Natural killer cell (primary cell): ENCODE measurements at regions of chr7 and their contacts with region 1.

Region 1: GRCh38 chr7:7848246-7848645 is 120.3 kb upstream of the GLCCI1 start:
- DNase-seq: peak in 1 of 2 donors; percentile 24
- ATAC-seq: peak; percentile 72 to 93 (median 79)
- H3K4me3 ChIP-seq: no peak overlapping the region
- H3K4me3 Mint-ChIP-seq: peak overlapping the region; percentile 82
- H3K27ac ChIP-seq: peak overlapping the region; percentile 44
- H3K27ac Mint-ChIP-seq: peak overlapping the region; percentile 83
- H3K4me1 ChIP-seq: peaks cover 12% of the 10 kb centered on the region
- H3K4me1 Mint-ChIP-seq: peaks cover 46 to 48% of the 10 kb centered on the region in 2 donors
- H3K27me3 ChIP-seq: no peaks in the 10 kb centered on the region
- H3K27me3 Mint-ChIP-seq: no peaks in the 10 kb centered on the region
- CTCF ChIP-seq: no peak

Region 2: DNA sequence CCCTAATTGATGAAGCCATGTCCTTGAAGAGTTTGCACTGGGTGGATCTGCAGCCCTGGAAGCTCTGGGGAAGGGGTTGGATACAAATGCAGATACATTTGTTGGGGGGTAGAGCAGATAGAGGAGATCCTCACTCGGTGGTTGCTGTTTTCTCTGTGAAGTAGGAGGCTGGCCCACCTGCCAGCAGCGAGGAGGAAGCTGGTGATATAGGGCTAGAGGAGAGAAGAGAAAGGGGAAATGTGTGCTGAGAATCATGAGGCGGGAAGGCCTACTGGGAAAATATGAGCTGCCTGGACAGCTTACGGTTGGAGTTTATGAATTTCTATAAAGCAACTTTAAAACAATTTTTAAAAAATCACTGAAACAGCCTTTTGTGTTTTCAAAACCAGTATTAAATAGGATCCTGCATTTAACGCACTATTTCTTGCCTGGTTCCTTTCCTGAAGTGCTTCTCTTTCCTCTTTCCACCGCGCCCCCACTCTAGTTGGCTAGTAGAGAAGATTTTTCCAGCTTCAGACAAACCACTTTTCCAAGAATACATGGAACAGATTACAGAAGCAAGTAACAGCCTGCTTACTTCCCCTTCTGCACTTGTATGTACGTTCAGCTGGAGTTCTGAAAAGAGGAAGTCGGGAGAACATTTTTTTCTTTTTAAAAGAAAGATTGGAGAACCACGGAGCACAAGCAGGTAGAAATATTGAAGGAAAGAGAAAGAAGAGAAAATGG is 19.8 kb after region 1 on chr7:
- intact Hi-C with region 1: loop called (anchors 2 kb)
- DNase-seq: no peak
- ATAC-seq: peak in 2 of 3 donors; percentile 5 to 33
- H3K4me3 ChIP-seq: no peak overlapping the region
- H3K4me3 Mint-ChIP-seq: no peak overlapping the region
- H3K27ac ChIP-seq: peak overlapping the region; percentile 63
- H3K27ac Mint-ChIP-seq: no peak overlapping the region
- H3K4me1 ChIP-seq: peaks cover 12% of the 10 kb centered on the region
- H3K4me1 Mint-ChIP-seq: peaks cover 0 to 8% of the 10 kb centered on the region in 2 donors
- H3K27me3 ChIP-seq: no peaks in the 10 kb centered on the region
- H3K27me3 Mint-ChIP-seq: no peaks in the 10 kb centered on the region
- CTCF ChIP-seq: no peak

Region 3: DNA sequence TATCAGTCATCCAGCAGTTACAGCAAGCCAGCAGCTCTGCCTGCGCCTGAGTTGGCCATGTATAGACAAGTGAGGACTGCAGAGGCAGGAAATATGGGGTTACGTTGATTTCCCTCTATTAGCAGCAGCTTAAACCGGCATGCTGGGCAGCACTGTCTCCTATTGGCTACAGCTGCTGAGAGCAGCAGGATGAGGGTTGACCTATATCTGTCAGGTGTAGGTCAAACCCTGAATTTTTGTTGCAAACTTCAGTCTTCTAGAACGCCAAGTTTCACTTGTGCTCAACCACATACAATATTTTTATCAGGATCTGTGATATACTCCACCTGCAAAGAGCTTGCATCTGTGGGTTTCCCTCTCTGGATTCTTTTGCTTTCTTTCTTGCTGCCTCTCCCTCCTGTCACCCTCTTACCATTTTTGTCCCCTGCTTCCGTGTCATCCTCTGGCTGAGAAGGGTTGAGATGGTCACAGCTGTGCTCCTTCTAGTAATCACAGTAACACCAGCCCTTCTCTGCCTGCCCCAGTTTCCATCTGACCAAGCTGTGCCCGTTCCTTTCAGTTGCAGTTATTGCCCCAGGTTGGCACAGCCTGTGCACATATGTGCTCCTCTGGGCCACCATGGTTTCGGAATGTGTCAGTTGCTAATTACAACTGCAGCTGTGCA is 96.5 kb after region 1 on chr7:
- intact Hi-C with region 1: loop called (anchors 2 kb)
- DNase-seq: peak; percentile 19 to 77
- ATAC-seq: peak; percentile 79 to 85 (median 82)
- H3K4me3 ChIP-seq: peak overlapping the region; percentile 21
- H3K4me3 Mint-ChIP-seq: peak overlapping the region; percentile 73
- H3K27ac ChIP-seq: peak overlapping the region; percentile 71
- H3K27ac Mint-ChIP-seq: peak overlapping the region; percentile 81 to 86
- H3K4me1 ChIP-seq: peaks cover 26% of the 10 kb centered on the region
- H3K4me1 Mint-ChIP-seq: peaks cover 51 to 53% of the 10 kb centered on the region in 2 donors
- H3K27me3 ChIP-seq: no peaks in the 10 kb centered on the region
- H3K27me3 Mint-ChIP-seq: no peaks in the 10 kb centered on the region
- CTCF ChIP-seq: no peak